Naive thymus-derived CD4-positive, alpha-beta T cell (primary cell): ENCODE measurements at regions of chr2 and their contacts with region 1.

Region 1: GRCh38 chr2:197239434-197239833 is 71.1 kb downstream of the ANKRD44 start:
- DNase-seq: peak in 1 of 9 donors; percentile 30
- ATAC-seq: peak; percentile 48
- H3K4me3 ChIP-seq: peak overlapping the region; percentile 52
- H3K4me3 Mint-ChIP-seq: peak overlapping the region; percentile 72 to 91 (median 83)
- H3K27ac ChIP-seq: peak overlapping the region; percentile 70
- H3K27ac Mint-ChIP-seq: peak overlapping the region; percentile 87 to 98 (median 94)
- H3K4me1 ChIP-seq: peaks cover 86 to 87% of the 10 kb centered on the region in 2 donors
- H3K4me1 Mint-ChIP-seq: peaks cover 62 to 95% (median 89%) of the 10 kb centered on the region in 7 donors
- H3K27me3 ChIP-seq: no peaks in the 10 kb centered on the region
- H3K27me3 Mint-ChIP-seq: no peaks in the 10 kb centered on the region

Region 2: DNA sequence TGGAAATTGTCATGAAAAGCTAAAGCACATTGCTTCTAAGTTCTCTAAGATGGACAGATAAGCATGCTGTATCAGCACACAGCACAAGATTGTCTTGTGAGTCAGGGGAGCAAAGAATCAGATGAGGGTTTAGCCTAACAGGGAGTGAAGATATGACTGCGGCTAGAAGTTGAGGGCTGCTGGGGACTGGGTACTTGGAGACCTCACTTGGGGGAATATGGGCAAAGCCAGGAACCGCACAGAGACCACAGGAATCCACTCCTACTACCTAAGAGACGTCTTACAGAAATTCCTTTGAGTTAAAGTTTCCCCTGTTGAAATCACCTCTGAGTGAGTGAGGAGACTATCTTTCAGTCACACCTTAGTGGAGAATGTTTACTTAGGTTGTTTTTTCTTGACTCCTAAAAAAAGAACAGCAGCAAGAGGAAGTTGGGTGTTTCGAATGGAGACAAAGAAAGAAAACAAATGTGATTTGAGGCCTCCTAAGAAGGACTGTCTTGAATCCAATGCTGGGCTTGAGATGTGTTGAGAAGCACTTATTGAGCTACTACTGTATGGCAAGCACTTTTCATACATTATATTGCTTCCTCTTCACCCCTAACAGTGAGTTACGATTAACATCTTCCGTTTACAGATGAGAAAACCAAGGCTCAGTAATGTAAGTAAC is 29.6 kb before region 1 on chr2:
- CTCF ChIA-PET with region 1: interaction called, 9 read pairs
- POLR2A ChIA-PET with region 1: interaction called, 24 read pairs
- intact Hi-C with region 1: loop called (anchors 1 kb)
- DNase-seq: peak in 5 of 9 donors; percentile 34 to 73 (median 50)
- ATAC-seq: peak; percentile 23
- H3K4me3 ChIP-seq: peak overlapping the region; percentile 12
- H3K4me3 Mint-ChIP-seq: peak overlapping the region; percentile 61 to 86 (median 78)
- H3K27ac ChIP-seq: peak overlapping the region; percentile 82
- H3K27ac Mint-ChIP-seq: peak overlapping the region; percentile 79 to 100 (median 98)
- H3K4me1 ChIP-seq: peaks cover 93 to 98% of the 10 kb centered on the region in 2 donors
- H3K4me1 Mint-ChIP-seq: peaks cover 76 to 99% (median 97%) of the 10 kb centered on the region in 7 donors
- H3K27me3 ChIP-seq: no peaks in the 10 kb centered on the region
- H3K27me3 Mint-ChIP-seq: no peaks in the 10 kb centered on the region

Region 3: DNA sequence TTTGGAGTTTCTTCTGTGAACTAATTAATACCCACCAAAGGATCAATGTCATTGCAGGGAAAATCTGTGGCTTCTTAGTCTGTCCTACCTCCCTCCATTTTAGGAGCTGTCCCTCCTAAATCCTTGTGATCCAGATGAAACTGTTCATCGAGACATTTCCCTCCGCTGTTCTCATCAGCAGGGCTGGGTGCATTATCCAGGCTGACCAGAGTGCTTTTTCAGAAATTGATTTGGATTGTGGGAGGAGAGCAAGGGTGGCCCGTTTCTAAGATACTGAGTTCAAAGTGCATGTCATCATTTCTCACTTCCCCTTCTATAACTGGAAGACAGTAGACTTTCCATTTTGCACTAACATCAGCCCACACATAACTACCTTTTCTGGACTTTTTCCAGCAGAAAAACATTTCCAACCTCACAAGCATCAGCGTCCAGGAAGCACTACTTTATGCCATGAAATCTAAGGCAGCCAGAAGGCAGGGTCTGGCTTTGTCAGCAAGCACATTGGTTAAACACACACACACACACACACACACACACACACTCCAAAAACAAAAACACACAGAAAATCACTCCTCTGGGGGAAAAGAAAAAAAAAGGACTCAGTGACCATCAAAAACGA is 23.0 kb before region 1 on chr2:
- CTCF ChIA-PET with region 1: interaction called, 5 read pairs
- POLR2A ChIA-PET with region 1: interaction called, 14 read pairs
- intact Hi-C with region 1: loop called (anchors 1 kb)
- DNase-seq: peak in 1 of 9 donors; percentile 54
- ATAC-seq: peak; percentile 43
- H3K4me3 ChIP-seq: peak overlapping the region; percentile 28
- H3K4me3 Mint-ChIP-seq: peak overlapping the region; percentile 63 to 86 (median 74)
- H3K27ac ChIP-seq: peak overlapping the region; percentile 60
- H3K27ac Mint-ChIP-seq: peak overlapping the region; percentile 79 to 100 (median 97)
- H3K4me1 ChIP-seq: peaks cover 76 to 81% of the 10 kb centered on the region in 2 donors
- H3K4me1 Mint-ChIP-seq: peaks cover 57 to 96% (median 89%) of the 10 kb centered on the region in 7 donors
- H3K27me3 ChIP-seq: no peaks in the 10 kb centered on the region
- H3K27me3 Mint-ChIP-seq: no peaks in the 10 kb centered on the region

Region 4: DNA sequence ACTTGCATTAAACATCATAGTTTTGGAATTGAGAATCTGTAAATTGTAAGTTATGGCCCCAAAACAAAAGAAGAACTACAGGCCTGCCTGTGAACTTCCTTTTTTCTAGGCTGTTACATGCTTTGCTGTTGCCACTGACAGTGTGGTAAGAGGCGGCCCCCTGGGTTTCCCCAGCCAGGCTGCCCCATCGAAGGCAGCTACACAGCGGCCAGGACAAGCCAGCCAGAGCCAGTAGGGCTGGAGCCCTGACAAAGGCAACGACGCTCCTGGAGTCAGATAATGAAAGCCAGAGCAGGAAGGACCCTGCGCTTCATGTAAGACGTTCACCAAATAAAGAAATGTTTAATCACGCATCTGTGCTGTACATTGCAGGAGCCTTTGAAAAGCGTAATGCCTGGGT is 16.1 kb after region 1 on chr2:
- CTCF ChIA-PET with region 1: interaction called, 5 read pairs
- POLR2A ChIA-PET with region 1: interaction called, 19 read pairs
- intact Hi-C with region 1: loop called (anchors 1 kb)
- DNase-seq: peak in 7 of 9 donors; percentile 47 to 83 (median 56)
- ATAC-seq: peak; percentile 96
- H3K4me3 ChIP-seq: peak overlapping the region; percentile 38
- H3K4me3 Mint-ChIP-seq: peak overlapping the region; percentile 69 to 88 (median 77)
- H3K27ac ChIP-seq: peak overlapping the region; percentile 80
- H3K27ac Mint-ChIP-seq: peak overlapping the region; percentile 84 to 98 (median 94)
- H3K4me1 ChIP-seq: peaks cover 68 to 74% of the 10 kb centered on the region in 2 donors
- H3K4me1 Mint-ChIP-seq: peaks cover 58 to 98% (median 82%) of the 10 kb centered on the region in 7 donors
- H3K27me3 ChIP-seq: no peaks in the 10 kb centered on the region
- H3K27me3 Mint-ChIP-seq: no peaks in the 10 kb centered on the region

Region 5: DNA sequence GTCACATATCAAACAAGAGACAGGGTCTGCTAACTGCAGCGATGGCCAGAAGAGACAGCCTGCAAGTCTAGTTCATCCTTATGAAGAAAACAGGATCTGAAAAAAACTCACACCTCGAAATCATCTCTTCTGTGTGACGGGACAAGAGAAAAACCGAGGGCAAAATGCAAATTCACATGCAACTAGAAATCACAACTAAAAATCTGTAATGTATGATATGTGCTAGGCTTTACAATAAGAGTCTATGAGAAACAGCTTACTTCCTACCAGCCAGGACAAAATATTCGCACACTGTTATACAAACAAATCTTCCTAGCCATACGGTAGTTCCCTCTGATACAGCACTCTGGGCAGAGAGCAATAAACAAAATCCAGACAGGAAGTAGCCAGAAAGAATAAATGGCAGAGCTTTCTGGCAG is 22.4 kb after region 1 on chr2:
- CTCF ChIA-PET with region 1: interaction called, 4 read pairs
- POLR2A ChIA-PET with region 1: interaction called, 12 read pairs
- intact Hi-C with region 1: no loop called
- DNase-seq: peak in 3 of 9 donors; percentile 30 to 35 (median 34)
- ATAC-seq: peak; percentile 45
- H3K4me3 ChIP-seq: peak overlapping the region; percentile 43
- H3K4me3 Mint-ChIP-seq: peak overlapping the region in 9 of 10 donors; percentile 64 to 85 (median 70)
- H3K27ac ChIP-seq: peak overlapping the region; percentile 54
- H3K27ac Mint-ChIP-seq: peak overlapping the region; percentile 86 to 96 (median 93)
- H3K4me1 ChIP-seq: peaks cover 79 to 81% of the 10 kb centered on the region in 2 donors
- H3K4me1 Mint-ChIP-seq: peaks cover 63 to 93% (median 84%) of the 10 kb centered on the region in 7 donors
- H3K27me3 ChIP-seq: no peaks in the 10 kb centered on the region
- H3K27me3 Mint-ChIP-seq: no peaks in the 10 kb centered on the region

Region 6: DNA sequence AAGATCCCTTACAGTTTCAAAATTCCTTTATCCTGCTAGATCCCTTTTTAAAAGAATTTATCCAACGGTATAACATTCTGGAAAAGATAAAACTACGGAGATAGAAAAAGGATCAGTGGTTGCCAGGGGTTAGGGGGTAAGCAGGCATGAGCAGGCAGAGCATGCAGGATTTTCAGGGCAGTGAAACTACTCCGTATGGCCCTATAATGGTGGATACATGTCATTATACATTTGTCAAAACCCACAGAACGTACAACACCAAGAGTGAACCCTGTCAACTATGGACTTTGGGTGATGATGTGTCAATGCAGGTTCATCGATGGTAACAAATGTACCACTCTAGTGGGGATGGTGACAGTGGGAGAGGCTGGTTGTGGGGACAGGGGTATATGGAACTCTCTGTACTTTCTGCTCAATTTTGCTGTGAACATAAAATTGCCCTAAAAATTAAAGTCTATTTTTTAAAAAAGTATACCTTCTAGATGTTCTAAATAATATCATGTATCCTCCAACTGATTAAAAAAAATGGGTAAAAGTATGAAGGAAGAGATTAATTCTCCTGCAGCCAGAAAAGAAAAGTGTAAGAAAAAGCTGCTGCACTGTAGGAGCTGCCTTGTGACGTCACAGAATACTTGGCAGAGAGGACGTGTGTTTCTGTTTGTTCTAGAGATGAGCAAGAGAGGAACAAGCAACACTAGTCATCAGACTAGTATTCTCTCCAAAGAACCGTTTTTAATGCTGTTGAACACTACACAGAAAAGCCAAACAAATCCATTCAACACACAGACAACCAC is 47.6 kb after region 1 on chr2:
- CTCF ChIA-PET with region 1: no interaction called
- POLR2A ChIA-PET with region 1: no interaction called
- intact Hi-C with region 1: loop called in 1 of 2 experiments (anchors 1 kb)
- DNase-seq: peak in 7 of 9 donors; percentile 52 to 83 (median 74)
- ATAC-seq: peak; percentile 96
- H3K4me3 ChIP-seq: no peak overlapping the region
- H3K4me3 Mint-ChIP-seq: peak overlapping the region; percentile 70 to 90 (median 86)
- H3K27ac ChIP-seq: peak overlapping the region; percentile 55
- H3K27ac Mint-ChIP-seq: peak overlapping the region; percentile 87 to 99 (median 98)
- H3K4me1 ChIP-seq: peaks cover 75 to 90% of the 10 kb centered on the region in 2 donors
- H3K4me1 Mint-ChIP-seq: peaks cover 60 to 96% (median 83%) of the 10 kb centered on the region in 7 donors
- H3K27me3 ChIP-seq: no peaks in the 10 kb centered on the region
- H3K27me3 Mint-ChIP-seq: no peaks in the 10 kb centered on the region